ENCODE measurements at regions of chr3 and their contacts with region 1.

Region 1: DNA sequence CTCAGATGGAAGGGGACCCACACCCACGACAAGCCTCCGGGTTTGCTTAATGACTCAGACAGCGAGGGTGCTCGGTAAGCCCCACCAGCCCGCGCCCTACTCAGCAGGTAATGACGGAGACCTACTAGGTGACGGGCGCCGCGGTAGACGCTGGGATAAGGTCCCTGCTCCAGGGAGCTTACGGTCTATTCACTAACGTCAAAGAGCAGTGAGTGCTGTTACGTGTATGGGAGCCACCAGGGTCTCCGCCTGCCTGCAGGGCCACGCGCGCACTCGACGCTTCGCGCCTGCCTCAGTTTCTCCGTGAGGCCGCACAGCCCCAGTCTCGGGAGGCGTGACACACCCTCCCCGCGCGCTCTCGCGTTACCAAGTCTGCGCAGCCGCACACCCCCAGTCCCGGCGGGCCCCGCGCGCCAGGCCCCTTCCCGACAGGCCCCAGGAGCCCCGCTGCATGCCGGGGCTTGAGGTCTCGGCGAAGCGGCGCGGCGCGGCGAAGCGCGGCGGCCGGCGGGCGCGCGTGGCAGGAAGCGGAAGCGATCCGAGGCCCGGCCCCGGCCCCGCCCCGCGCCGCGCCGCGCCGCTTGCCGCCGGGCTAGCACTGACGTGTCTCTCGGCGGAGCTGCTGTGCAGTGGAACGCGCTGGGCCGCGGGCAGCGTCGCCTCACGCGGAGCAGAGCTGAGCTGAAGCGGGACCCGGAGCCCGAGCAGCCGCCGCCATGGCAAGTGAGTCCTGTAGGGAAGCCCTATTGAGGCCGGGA is at the start of gene SEC61A1:
- DNase-seq: peak; percentile 96
- H3K4me3 Mint-ChIP-seq: peak within 1 kb of the TSS; percentile 99
- H3K27ac Mint-ChIP-seq: peak within 1 kb of the TSS; percentile 96
- H3K4me1 Mint-ChIP-seq: peaks cover 43% of the 10 kb centered on the region
- H3K27me3 Mint-ChIP-seq: peaks cover 6% of the 10 kb centered on the region
- total RNA-seq, gene SEC61A1: 205 and 214 TPM in 2 replicates

Region 2: GRCh38 chr3:127574880-127575878 is 476.8 kb before region 1 on chr3:
- intact Hi-C with region 1: loop called (anchors 5 kb)
- DNase-seq: peak; percentile 82
- H3K4me3 Mint-ChIP-seq: no peak overlapping the region
- H3K27ac Mint-ChIP-seq: peak overlapping the region; percentile 28
- H3K4me1 Mint-ChIP-seq: peaks cover 7% of the 10 kb centered on the region
- H3K27me3 Mint-ChIP-seq: no peaks in the 10 kb centered on the region

Region 3: DNA sequence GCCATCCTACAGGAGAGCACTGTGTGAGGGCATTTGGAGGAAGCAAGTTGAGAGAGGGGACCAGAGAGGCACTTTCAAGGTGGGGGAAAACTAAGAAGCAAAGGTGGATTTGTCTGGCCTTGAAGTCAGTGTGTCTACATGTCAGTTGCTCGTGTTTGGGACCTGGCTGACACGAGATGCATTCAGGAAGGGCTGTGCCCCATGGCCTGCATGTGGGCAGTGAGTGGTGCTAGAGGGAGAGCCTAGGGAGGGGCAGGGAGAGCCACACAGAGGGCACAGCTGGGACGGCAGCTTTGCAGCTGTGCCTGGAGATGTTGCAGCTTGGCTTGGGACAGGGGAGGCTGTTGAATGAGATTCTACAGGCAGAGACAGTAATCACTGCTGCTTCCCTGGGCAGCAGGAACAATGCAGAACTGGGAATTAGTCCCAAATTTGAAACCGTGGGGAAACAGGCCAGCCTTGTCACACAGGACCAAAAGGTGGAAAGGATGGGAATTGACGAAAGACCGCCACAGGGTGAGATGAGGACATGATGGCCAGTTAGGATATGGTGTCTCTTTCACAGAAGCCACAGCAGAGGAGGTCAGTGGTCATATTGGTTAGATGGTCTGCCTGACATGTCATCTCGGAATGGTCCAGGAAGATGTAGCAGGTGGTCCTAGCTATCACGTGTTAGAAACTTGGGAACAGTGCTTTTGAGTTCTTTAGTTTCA is 10.2 kb after region 1 on chr3:
- intact Hi-C with region 1: loop called (anchors 1 kb)
- DNase-seq: no peak
- H3K4me3 Mint-ChIP-seq: no peak overlapping the region
- H3K27ac Mint-ChIP-seq: peak overlapping the region; percentile 1
- H3K4me1 Mint-ChIP-seq: peaks cover 25% of the 10 kb centered on the region
- H3K27me3 Mint-ChIP-seq: no peaks in the 10 kb centered on the region

Region 4: DNA sequence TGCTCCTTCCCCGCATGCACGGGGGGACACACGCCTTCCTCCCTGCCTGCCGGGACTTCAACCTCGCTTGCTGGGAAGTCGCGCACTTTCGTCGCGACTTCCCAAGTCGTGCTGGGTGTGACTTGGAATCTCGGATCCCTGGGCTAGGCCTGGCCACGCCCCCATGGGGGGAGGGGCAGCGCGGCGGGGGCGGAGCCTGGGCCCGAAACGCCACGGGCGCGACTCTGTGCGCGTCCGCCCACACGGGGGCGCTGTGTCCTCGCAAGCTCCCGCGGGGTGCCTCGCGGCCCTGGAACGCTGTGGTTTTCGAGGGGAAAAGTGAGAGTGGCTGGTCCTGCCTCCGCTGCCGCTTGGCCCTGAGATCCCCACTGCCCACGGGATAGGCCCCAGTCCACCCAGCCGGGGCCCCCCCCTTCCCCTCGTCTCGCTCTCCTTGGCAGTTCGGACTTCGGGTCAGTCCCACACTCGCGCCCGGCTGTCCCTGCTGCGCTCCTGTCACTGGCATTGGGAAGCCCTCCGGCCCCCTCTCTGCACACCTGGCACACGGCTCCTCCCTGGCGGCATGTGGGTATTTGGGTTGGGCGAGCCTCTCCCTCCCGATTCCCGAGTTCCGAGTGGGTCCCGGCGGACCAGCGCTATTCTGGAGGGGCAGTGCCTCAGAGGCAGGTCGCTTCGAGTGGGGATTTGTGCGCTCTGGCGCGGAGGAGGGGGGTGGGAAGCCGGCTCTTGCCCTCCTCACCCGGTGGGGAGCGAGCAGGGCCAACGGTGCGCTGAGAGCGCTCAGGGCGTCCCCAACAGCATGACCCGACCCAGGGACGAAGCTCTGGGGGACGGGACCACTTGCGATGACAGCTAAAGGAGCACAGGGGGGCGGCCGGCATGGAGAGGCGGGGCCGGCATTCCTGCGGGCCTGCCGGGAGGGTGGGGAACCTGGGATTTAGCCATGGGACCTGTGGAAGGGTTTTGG is 23.8 kb after region 1 on chr3:
- intact Hi-C with region 1: loop called (anchors 2 kb)
- DNase-seq: peak; percentile 76
- H3K4me3 Mint-ChIP-seq: peak overlapping the region; percentile 62
- H3K27ac Mint-ChIP-seq: no peak overlapping the region
- H3K4me1 Mint-ChIP-seq: peaks cover 7% of the 10 kb centered on the region
- H3K27me3 Mint-ChIP-seq: peaks cover 10% of the 10 kb centered on the region

Region 5: GRCh38 chr3:128123538-128124368 is 71.7 kb after region 1 on chr3 and contains the start of gene RUVBL1:
- intact Hi-C with region 1: loop called (anchors 1 kb)
- DNase-seq: peak; percentile 95
- H3K4me3 Mint-ChIP-seq: peak within 1 kb of the TSS; percentile 99
- H3K27ac Mint-ChIP-seq: peak within 1 kb of the TSS; percentile 99
- H3K4me1 Mint-ChIP-seq: peaks cover 24% of the 10 kb centered on the region
- H3K27me3 Mint-ChIP-seq: peaks cover 1% of the 10 kb centered on the region
- total RNA-seq, gene RUVBL1: 135 and 137 TPM in 2 replicates

Region 6: DNA sequence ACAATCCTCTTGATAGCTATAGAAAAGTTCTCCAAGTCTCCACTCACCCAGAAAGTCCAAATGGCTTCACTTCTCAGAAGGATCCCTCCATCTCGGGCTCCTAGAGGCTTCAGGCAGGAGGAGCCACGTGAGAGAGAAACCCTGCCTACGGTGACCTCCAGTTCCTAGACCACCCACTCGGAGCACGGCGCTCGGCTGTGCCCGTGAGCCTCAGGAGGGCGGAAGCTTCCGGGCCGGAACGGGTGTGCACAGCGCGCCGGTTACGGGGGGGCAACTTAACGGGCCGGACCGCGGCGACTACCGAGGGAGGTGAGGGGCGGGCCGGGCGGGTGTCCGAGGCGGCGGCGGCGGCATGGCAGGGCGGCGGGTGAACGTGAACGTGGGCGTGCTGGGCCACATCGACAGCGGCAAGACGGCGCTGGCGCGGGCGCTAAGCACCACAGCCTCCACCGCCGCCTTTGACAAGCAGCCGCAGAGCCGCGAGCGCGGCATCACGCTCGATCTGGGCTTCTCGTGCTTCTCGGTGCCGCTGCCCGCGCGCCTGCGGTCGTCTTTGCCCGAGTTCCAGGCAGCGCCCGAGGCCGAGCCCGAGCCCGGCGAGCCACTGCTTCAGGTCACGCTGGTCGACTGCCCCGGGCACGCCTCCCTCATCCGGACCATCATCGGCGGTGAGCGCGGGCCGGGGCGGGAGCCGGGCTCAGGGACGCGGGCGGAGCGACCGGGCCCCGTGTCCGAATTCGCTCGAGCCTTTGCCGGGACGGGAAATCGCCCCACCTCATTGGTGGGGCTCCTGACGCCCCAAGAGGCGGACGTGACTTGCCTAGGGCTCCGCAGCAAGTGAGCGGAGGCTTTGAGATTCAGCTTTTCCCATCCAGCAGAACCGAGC is 101.4 kb after region 1 on chr3 and contains the start of gene EEFSEC:
- intact Hi-C with region 1: loop called (anchors 1 kb)
- DNase-seq: peak; percentile 82
- H3K4me3 Mint-ChIP-seq: peak within 1 kb of the TSS; percentile 94
- H3K27ac Mint-ChIP-seq: peak within 1 kb of the TSS; percentile 98
- H3K4me1 Mint-ChIP-seq: peaks cover 31% of the 10 kb centered on the region
- H3K27me3 Mint-ChIP-seq: peaks cover 3% of the 10 kb centered on the region
- total RNA-seq, gene EEFSEC: 18.7 and 19.5 TPM in 2 replicates

Region 7: GRCh38 chr3:128236657-128237056 is 184.6 kb after region 1 on chr3:
- intact Hi-C with region 1: no loop called
- DNase-seq: no peak
- H3K4me3 Mint-ChIP-seq: no peak overlapping the region
- H3K27ac Mint-ChIP-seq: no peak overlapping the region
- H3K4me1 Mint-ChIP-seq: no peaks in the 10 kb centered on the region
- H3K27me3 Mint-ChIP-seq: no peaks in the 10 kb centered on the region

Region 8: GRCh38 chr3:129893581-129894070 is 1841.6 kb after region 1 on chr3 and contains the start of gene TMCC1:
- intact Hi-C with region 1: loop called (anchors 5 kb)
- DNase-seq: peak; percentile 83
- H3K4me3 Mint-ChIP-seq: peak within 1 kb of the TSS; percentile 91
- H3K27ac Mint-ChIP-seq: peak within 1 kb of the TSS; percentile 89
- H3K4me1 Mint-ChIP-seq: peaks cover 47% of the 10 kb centered on the region
- H3K27me3 Mint-ChIP-seq: no peaks in the 10 kb centered on the region
- total RNA-seq, gene TMCC1: 17.1 and 22.4 TPM in 2 replicates

Measured in activated T-helper 1 cell treated with anti-CD3 and anti-CD28 coated beads, Interleukin-12 subunit alpha, Interleukin-12 subunit beta, Interleukin-2, Interleukin-4 antibody, amounts not matched to agents 30 ng/mL and 10 ng/mL and 1 ng/mL, durations not matched to agents 14 hours and 24 hours and 36 hours (primary cell).